ENCODE measurements at regions of chr19 and their contacts with region 1.

Region 1: DNA sequence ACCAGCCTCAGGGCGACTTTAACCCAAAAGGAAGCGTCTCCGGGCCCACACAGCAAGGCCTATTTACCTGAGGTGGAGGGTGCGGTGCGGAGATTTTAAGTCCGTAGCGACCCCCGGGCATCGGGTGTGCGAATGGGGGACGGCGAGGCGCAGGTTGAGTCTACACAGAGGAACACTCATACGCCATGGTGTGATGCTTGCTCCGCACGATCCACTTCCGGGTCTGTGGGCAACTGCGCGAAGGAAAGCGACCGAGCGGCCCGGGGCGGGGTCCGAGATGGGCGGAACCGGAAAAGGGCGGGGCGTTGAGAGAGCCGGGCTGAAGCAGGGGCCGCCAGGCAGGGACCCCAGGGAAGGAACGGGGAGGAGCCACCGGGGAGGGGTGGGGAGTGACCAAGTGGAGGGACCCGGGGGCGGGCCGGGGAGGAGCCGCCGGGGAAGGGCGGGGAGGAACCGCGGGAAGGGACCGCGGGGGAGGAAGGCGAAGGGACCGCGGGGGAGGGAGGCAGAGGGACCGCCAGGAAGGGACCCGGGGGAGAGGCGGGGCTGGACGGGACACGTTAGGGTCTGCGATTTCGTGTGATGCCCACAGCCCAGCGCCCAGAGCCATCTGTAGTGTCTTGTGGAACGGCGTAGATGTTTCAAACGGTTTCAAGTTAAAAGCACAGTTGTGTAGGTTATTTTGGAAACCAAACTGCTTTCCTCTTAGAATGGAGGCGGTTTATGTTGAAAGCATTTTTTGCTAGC is at the start of gene ZNF160:
- DNase-seq: peak in 1 of 2 donors; percentile 96
- H3K4me3 ChIP-seq: peak within 1 kb of the TSS; percentile 55 to 70
- H3K27ac ChIP-seq: peak within 1 kb of the TSS; percentile 65
- H3K4me1 ChIP-seq: peaks cover 21% of the 10 kb centered on the region
- H3K27me3 ChIP-seq: no peaks in the 10 kb centered on the region
- CTCF ChIP-seq: no peak
- POLR2A ChIP-seq: peak in 1 of 2 donors; percentile 87
- total RNA-seq, gene ZNF160: 41.7 TPM

Region 2: DNA sequence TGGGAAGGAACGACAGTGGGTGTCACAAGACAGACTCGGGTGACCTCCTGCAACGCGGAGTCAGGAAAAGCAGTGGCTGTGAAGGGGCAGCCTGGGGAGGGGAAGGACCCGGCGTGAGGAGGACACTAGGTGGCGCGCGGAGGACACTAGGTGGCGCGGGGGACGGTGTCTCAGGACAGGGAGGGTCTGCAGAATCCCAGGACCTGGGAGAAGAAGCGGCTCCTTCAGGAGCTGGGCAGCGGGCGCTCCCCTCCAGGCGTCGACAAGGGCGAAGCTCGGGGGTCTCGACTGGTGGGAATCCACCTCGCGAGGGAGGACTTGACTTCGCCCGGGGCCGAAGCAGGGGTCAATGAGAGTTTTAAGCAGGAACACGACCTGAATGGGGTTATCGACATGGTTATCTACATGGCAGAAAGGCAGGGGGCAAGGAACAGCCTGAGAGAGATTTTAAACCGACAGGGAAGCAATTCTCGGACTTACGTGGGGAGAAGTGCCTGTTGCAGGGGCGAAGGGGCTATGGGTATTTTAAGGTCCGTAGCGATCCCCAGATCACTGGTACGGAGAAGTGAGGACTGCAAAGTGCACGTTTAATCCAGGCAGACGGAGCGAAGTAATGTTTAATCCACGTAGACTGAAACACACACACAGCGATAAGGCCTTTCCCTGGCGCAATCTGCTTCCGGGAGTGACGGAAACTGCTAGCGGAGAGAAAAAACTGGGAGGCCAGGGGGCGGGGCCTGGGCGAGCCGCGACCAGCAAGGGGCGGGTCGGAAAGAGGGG is 963.9 kb before region 1 on chr19 and contains the start of gene ZNF616:
- intact Hi-C with region 1: loop called (anchors 5 kb)
- DNase-seq: peak in 1 of 2 donors; percentile 94
- H3K4me3 ChIP-seq: peak within 1 kb of the TSS; percentile 77 to 78
- H3K27ac ChIP-seq: peak within 1 kb of the TSS; percentile 95
- H3K4me1 ChIP-seq: peaks cover 21% of the 10 kb centered on the region
- H3K27me3 ChIP-seq: no peaks in the 10 kb centered on the region
- CTCF ChIP-seq: peak; percentile 58 to 80 (median 77)
- POLR2A ChIP-seq: peak in 1 of 2 donors; percentile 85
- total RNA-seq, gene ZNF616: 2.7 TPM

Region 3: GRCh38 chr19:52942386-52943133 is 160.8 kb before region 1 on chr19:
- intact Hi-C with region 1: loop called (anchors 2 kb)
- DNase-seq: peak in 1 of 2 donors; percentile 95
- H3K4me3 ChIP-seq: peak overlapping the region; percentile 56 to 91
- H3K27ac ChIP-seq: peak overlapping the region; percentile 79
- H3K4me1 ChIP-seq: peaks cover 28% of the 10 kb centered on the region
- H3K27me3 ChIP-seq: no peaks in the 10 kb centered on the region
- CTCF ChIP-seq: no peak
- POLR2A ChIP-seq: peak in 1 of 2 donors; percentile 65

Region 4: DNA sequence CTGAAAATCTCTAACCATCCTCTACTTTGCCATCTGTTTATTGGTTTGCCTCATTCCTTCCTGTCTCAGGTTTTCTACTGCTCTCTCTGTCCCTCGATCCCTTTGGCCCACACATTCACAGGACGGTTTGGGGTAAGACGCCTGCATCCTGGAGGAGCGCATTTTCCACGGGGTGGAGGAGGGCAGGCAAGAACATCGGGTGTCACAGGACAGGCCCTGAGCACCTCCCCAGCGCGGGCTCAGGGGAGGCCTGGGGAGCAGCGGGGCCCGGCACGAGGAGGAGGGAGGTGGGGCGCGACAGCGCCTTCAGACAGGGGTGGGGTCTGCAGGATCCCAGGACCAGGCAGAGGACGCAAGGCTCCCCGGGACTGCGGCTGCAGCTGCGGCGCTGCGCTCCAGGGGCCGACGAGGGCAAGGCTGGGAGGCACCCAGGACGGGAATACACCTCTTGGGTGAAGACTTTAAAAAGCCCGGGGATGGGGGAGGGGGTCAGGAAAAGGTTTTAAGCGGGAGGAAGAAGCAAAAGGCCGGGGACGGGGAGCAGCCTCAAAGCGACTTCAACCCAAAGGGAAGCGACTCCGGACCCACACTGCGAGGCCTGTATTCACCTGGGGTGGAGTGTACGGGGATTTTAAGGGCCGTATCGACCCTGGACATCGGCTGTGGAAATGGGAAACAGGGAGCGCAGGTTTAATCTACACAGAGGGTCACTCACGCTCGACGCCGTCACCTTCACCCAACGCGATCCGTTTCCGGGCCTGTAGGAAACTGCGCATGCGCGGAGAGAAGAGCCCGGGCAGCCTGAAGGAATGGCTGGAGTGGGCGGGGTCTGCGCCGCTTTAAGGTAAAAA is 29.0 kb after region 1 on chr19 and contains the start of gene ZNF415:
- intact Hi-C with region 1: loop called (anchors 2 kb)
- DNase-seq: no peak
- H3K4me3 ChIP-seq: peak within 1 kb of the TSS; percentile 46 to 67
- H3K27ac ChIP-seq: peak within 1 kb of the TSS; percentile 48
- H3K4me1 ChIP-seq: peaks cover 24% of the 10 kb centered on the region
- H3K27me3 ChIP-seq: no peaks in the 10 kb centered on the region
- CTCF ChIP-seq: no peak
- POLR2A ChIP-seq: no peak
- total RNA-seq, gene ZNF415: 6.6 TPM

Region 5: GRCh38 chr19:53612755-53613154 is 509.4 kb after region 1 on chr19:
- intact Hi-C with region 1: no loop called
- DNase-seq: no peak
- H3K4me3 ChIP-seq: no peak overlapping the region
- H3K27ac ChIP-seq: no peak overlapping the region
- H3K4me1 ChIP-seq: no peaks in the 10 kb centered on the region
- H3K27me3 ChIP-seq: no peaks in the 10 kb centered on the region
- CTCF ChIP-seq: no peak
- POLR2A ChIP-seq: no peak

Measured in vagina (tissue), 2 donors.